ENCODE measurements at regions of chr19 and their contacts with region 1.

Region 1: DNA sequence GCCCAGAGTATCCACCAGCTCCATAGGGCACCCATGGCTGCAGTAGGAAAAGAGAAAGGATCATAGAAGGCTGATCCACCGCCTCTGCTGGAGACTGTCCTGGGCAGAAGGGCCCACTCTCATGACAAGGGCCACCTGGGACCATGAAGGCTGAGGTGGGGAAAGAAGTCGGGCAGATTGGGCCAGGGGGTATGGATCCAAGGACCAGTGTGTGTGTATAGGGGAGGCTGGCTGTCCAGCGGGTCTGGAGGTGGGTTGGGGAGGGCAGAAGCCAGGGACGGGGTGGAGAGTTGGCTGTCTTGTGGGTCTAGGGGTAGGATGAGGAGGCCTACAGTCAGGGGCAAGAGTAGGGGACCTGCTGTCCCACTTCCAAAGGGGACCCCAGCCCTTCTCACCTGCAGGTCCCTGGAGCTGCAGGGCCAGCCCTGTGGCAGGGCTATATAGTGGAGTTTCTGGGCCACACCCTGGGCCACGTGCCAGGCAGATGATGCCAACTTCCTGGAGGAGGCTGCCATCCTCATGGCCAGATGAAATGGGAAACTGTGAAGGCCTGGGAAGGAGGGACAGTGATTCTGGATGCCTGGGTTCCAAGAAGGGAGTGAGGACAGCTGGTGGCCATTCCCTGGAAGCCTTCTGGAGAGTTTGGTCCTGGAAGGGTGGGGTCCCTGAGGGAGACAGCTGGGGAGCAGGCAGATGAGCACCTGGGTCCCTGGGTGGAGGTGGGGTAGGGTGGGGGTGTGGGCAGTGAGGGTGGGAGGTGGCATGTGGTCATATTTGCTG is at the start of gene FCGBP:
- DNase-seq: peak in 1 of 3 donors; percentile 19
- H3K4me3 ChIP-seq: no peak within 1 kb of the TSS
- H3K4me3 Mint-ChIP-seq: peak within 1 kb of the TSS in 1 of 2 donors; percentile 83
- H3K27ac ChIP-seq: no peak within 1 kb of the TSS
- H3K27ac Mint-ChIP-seq: no peak within 1 kb of the TSS
- H3K4me1 ChIP-seq: peaks cover 28 to 51% of the 10 kb centered on the region in 2 donors
- H3K4me1 Mint-ChIP-seq: peaks cover 36% of the 10 kb centered on the region
- H3K27me3 ChIP-seq: peaks cover 42 to 86% of the 10 kb centered on the region in 2 donors
- H3K27me3 Mint-ChIP-seq: peaks cover 82 to 98% (median 92%) of the 10 kb centered on the region in 3 donors
- CTCF ChIP-seq: no peak
- polyA plus RNA-seq, gene FCGBP: 0.07 to 0.29 TPM in 2 of 3 donors, not detected in the other

Region 2: GRCh38 chr19:39969681-39970424 is 35.1 kb after region 1 on chr19:
- intact Hi-C with region 1: loop called in 1 of 2 experiments (anchors 5 kb)
- DNase-seq: no peak
- H3K4me3 ChIP-seq: peak overlapping the region in 2 of 3 experiments; percentile 81 to 90
- H3K4me3 Mint-ChIP-seq: peak overlapping the region; percentile 96 to 98
- H3K27ac ChIP-seq: peak overlapping the region; percentile 26 to 93
- H3K27ac Mint-ChIP-seq: peak overlapping the region in 6 of 7 donors; percentile 0 to 99 (median 94)
- H3K4me1 ChIP-seq: peaks cover 19 to 21% of the 10 kb centered on the region in 2 donors
- H3K4me1 Mint-ChIP-seq: peaks cover 26% of the 10 kb centered on the region
- H3K27me3 ChIP-seq: peaks cover 9 to 48% of the 10 kb centered on the region in 2 donors
- H3K27me3 Mint-ChIP-seq: peaks cover 49 to 57% (median 51%) of the 10 kb centered on the region in 3 donors
- CTCF ChIP-seq: no peak

Measured in CD14-positive monocyte (primary cell).